Heart left ventricle (tissue), 16 donors: ENCODE measurements at regions of chr5 and their contacts with region 1.

Region 1: DNA sequence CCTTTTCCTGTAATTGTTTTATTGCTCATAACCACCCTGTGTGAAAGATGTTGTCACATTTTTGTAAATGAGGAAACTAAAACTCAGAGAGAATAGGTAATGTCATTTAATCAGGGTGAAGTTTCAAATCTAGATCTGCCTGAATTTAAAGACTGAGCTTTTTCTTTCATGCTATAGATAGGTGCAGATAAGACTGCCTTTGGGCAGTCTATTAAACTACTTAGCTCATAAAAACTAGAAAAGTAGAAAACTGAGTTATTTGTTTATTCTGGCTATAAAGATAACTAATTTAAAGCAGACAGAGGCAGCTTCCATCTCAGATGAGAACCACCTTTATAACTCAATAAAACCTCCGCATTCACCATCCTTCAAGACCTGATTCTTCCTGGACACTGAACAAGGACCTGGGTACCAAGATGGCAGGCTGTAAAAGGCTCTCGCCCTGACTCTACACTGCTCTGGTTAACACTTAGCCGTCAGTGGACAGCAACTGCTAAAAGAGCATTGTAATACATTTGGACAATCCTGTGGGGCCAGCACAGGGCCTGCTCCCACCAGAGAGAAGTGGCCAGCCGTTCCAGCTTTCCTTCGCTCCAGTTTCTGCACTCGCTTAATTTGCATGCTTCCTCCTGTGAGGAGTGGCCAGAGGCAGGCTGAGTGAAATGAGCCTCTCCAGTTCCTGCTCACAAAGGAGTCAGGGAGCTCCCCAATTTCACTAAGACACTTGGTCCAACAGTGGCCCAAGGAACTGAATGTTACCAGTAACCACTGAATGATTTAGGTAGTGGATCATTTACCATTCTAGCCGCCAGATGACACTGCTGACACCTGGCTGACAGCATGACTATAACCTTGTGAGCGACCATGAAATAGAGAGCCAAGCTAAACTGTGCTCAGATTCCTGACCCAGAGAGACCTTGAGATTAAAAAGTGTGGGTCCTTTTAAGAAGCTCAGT is 566.4 kb downstream of the EFNA5 start:
- DNase-seq: peak in 3 of 5 donors; percentile 17 to 43 (median 40)
- ATAC-seq: peak; percentile 88 to 97 (median 91)
- H3K4me3 ChIP-seq: no peak overlapping the region
- H3K27ac ChIP-seq: peak overlapping the region in 8 of 12 donors; percentile 3 to 53 (median 36)
- H3K4me1 ChIP-seq: peaks cover 0 to 3% (median 0%) of the 10 kb centered on the region in 12 donors
- H3K27me3 ChIP-seq: no peaks in the 10 kb centered on the region
- CTCF ChIP-seq: peak in 8 of 12 donors; percentile 14 to 54 (median 39)
- POLR2A ChIP-seq: no peak

Region 2: DNA sequence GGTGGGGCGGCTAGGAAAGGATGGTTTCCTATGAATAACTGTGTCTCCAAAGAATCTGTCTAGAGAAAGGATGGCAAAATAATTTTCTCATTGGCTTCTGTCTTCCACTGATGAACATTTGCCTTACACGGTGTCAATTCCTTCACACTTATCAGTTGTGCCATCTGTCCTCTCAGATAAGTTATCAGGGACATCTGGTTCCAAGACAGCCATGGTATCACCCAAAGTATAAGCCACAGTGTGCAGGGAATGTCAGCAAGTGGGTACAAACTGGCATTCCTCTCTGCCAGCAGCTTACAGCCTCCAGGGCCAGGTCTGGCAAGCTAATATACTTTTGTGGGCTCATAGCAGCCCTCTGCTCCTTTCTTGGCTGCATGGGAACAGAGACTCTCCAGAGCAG is 525.6 kb before region 1 on chr5:
- intact Hi-C with region 1: loop called in 1 of 10 experiments (anchors 10 kb)
- DNase-seq: no peak
- ATAC-seq: no peak
- H3K4me3 ChIP-seq: no peak overlapping the region
- H3K27ac ChIP-seq: no peak overlapping the region
- H3K4me1 ChIP-seq: no peaks in the 10 kb centered on the region
- H3K27me3 ChIP-seq: no peaks in the 10 kb centered on the region
- CTCF ChIP-seq: no peak
- POLR2A ChIP-seq: no peak

Region 3: GRCh38 chr5:106959397-106959796 is 144.9 kb before region 1 on chr5:
- intact Hi-C with region 1: no loop called
- DNase-seq: no peak
- ATAC-seq: no peak
- H3K4me3 ChIP-seq: no peak overlapping the region
- H3K27ac ChIP-seq: no peak overlapping the region
- H3K4me1 ChIP-seq: peaks cover 0 to 5% (median 0%) of the 10 kb centered on the region in 12 donors
- H3K27me3 ChIP-seq: no peaks in the 10 kb centered on the region
- CTCF ChIP-seq: no peak
- POLR2A ChIP-seq: no peak

Region 4: GRCh38 chr5:107248066-107248695 is 143.9 kb after region 1 on chr5:
- intact Hi-C with region 1: loop called in 1 of 10 experiments (anchors 10 kb)
- DNase-seq: peak in 4 of 5 donors; percentile 11 to 41 (median 28)
- ATAC-seq: peak in 2 of 4 donors; percentile 42 to 51
- H3K4me3 ChIP-seq: no peak overlapping the region
- H3K27ac ChIP-seq: no peak overlapping the region
- H3K4me1 ChIP-seq: peaks cover 0 to 2% (median 0%) of the 10 kb centered on the region in 12 donors
- H3K27me3 ChIP-seq: no peaks in the 10 kb centered on the region
- CTCF ChIP-seq: peak; percentile 37 to 75 (median 60)
- POLR2A ChIP-seq: no peak